ENCODE measurements at regions of chr1 and their contacts with region 1.

Region 1: GRCh38 chr1:91997607-91998195 is 32.1 kb upstream of the EPHX4 start:
- DNase-seq: peak; percentile 50
- H3K4me3 ChIP-seq: no peak overlapping the region
- H3K27ac ChIP-seq: no peak overlapping the region
- H3K4me1 ChIP-seq: no peaks in the 10 kb centered on the region
- CTCF ChIP-seq: peak; percentile 91

Region 2: DNA sequence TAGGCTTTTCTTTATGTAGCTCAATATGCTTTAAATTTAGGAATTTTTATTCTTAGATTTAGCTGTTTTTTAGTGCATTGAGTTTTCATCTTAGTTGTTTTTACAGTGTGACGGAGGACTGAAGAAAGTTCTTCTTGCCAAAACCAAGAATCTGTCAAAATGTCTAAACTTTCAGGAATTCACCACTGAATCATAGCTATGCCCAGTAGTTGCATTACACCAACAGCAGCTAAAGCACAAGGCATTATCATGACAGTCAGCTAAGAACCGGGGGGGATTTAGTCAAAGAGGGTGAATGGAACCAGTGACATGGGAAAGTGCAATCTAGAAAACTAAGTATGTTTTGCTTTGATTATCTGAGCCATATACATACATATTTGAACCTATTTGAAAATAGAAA is 213.5 kb after region 1 on chr1:
- CTCF ChIA-PET with region 1: no interaction called
- POLR2A ChIA-PET with region 1: no interaction called
- intact Hi-C with region 1: no loop called
- DNase-seq: no peak
- H3K4me3 ChIP-seq: no peak overlapping the region
- H3K27ac ChIP-seq: no peak overlapping the region
- H3K4me1 ChIP-seq: no peaks in the 10 kb centered on the region
- CTCF ChIP-seq: no peak

Region 3: DNA sequence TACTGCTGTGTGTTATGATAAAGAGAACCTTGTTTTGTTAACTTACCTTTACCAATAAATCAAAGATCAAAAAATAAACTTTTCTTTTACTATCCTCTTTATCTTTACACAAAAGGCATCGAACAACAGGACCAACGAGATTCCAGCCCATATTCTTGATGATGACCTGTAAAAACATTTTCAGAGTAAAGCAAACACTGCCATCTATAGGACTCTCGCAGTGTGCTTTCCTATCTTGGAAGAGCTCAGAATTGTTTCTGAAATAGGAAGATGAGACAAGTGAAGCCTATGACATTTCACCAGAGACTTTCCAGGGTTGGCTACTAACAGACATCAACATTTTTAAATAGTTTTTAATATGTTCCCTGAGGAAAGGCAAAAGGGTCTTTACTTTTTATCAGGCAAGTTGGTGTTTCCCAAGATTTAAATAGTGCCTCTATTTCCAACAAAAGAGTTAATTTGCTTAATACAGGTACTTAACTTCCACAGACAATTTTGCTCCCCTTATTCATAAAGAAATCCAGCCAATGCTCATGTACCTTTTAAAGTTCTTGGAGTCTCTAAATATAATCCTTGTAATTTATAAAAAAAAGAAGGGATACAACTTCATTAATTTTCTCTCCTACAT is 293.8 kb after region 1 on chr1:
- CTCF ChIA-PET with region 1: no interaction called
- POLR2A ChIA-PET with region 1: interaction called, 5 read pairs
- intact Hi-C with region 1: loop called (anchors 5 kb)
- DNase-seq: peak; percentile 50
- H3K4me3 ChIP-seq: no peak overlapping the region
- H3K27ac ChIP-seq: no peak overlapping the region
- H3K4me1 ChIP-seq: no peaks in the 10 kb centered on the region
- CTCF ChIP-seq: peak; percentile 88

Region 4: DNA sequence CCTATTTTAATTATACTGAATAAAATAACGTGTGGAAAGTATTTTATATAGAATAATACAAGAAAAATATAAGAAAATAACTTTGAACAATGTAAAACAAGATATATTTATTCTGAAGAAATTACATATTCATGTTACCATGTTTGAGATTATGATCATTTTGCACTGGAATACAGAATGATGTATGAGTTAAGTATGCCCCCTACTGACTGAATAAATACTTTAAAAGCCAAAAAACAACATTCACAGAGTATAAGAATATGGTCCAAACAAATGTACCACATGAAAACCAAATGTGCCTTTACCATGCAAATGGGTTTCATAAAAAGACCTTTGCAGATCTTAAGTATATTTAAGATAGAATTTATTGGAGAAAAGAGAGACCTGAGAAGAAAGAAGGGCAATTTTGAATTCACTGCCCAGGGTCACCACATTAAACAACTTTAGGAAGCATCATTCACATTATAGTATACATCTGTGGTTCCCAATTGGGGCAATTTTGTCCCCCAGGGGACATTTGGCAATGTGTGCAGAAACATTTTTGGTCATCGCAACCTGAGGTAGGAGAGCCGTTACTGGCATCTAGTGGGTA is 625.6 kb after region 1 on chr1:
- CTCF ChIA-PET with region 1: no interaction called
- POLR2A ChIA-PET with region 1: no interaction called
- intact Hi-C with region 1: loop called (anchors 5 kb)
- DNase-seq: peak; percentile 37
- H3K4me3 ChIP-seq: no peak overlapping the region
- H3K27ac ChIP-seq: no peak overlapping the region
- H3K4me1 ChIP-seq: no peaks in the 10 kb centered on the region
- CTCF ChIP-seq: peak; percentile 84

Measured in OCI-LY7 (cell line).